Activated CD4-positive, alpha-beta memory T cell treated with anti-CD3 and anti-CD28 coated beads for 36 hours (primary cell): ENCODE measurements at regions of chr1 and their contacts with region 1.

Region 1: GRCh38 chr1:84620720-84621313 is 46.6 kb upstream of the CTBS start:
- DNase-seq: peak; percentile 87
- H3K4me3 Mint-ChIP-seq: peak overlapping the region; percentile 90
- H3K27ac Mint-ChIP-seq: peak overlapping the region; percentile 85
- H3K4me1 Mint-ChIP-seq: peaks cover 19% of the 10 kb centered on the region
- H3K27me3 Mint-ChIP-seq: peaks cover 1% of the 10 kb centered on the region

Region 2: DNA sequence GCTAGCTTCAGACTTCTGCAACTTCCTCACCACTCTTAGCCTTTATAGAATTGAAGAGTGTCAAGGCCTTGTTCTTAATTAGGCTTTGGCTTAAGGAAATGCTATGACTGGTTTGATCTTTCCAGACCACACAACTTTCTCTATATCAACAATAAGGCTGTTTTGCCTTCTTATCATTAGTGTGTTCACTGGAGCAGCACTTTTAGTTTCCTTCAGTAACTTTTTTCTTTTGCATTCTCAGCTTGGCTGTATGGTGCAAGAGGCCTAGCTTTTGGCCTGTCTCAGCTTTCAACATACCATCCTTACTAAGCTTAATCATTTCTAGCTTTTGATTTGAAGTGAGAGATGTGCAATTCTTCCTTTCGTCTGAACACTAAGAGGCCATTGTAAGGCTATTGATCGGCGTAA is 468.2 kb before region 1 on chr1:
- CTCF ChIA-PET with region 1: no interaction called
- POLR2A ChIA-PET with region 1: no interaction called
- intact Hi-C with region 1: loop called (anchors 2 kb)
- DNase-seq: peak; percentile 43
- H3K4me3 Mint-ChIP-seq: peak overlapping the region; percentile 39
- H3K27ac Mint-ChIP-seq: peak overlapping the region; percentile 86
- H3K4me1 Mint-ChIP-seq: peaks cover 79% of the 10 kb centered on the region
- H3K27me3 Mint-ChIP-seq: no peaks in the 10 kb centered on the region

Region 3: DNA sequence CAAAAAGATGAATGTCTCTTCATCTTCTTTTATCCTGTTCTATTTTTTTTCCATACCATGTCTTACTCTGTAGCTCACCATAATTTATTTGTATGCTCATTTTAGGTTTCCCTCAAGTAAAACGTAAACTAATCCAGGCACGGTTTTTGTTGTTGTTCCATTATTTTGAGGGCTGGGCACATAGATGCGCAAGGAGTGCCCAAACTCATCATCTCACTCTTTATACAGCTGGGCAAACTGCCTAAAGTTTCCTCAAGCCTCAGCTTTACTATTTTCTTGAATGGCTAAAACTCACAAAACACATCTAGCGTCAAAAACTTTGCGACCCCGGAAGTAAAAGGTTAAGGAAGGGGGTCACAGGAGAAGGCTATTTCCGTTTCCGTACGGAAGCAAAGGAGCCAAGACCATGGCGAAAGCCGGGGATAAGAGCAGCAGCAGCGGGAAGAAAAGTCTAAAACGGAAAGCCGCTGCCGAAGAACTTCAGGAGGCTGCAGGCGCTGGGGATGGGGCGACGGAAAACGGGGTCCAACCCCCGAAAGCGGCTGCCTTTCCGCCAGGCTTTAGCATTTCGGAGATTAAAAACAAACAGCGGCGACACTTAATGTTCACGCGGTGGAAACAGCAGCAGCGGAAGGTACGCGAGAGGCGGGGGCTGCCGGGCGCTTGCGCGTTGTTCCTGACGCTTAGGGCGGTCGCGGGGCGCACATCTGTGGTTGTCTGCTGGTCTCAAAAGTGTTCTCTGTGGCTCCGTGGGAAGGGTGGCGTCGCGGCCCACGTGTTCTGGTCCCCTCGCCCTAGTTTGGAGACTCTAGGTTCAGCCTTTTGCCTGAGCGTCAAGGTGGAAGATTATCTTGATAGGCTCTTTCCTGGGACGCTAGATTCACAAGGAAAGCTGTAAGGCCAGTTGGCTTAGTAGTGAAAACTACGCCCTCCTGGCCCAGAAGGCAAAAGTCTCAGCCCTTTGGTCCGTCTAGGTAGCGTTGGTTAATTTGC is 141.6 kb before region 1 on chr1 and contains the start of gene RPF1:
- CTCF ChIA-PET with region 1: interaction called, 27 read pairs
- POLR2A ChIA-PET with region 1: no interaction called
- intact Hi-C with region 1: loop called (anchors 1 kb)
- DNase-seq: peak; percentile 82
- H3K4me3 Mint-ChIP-seq: peak within 1 kb of the TSS; percentile 96
- H3K27ac Mint-ChIP-seq: peak within 1 kb of the TSS; percentile 96
- H3K4me1 Mint-ChIP-seq: peaks cover 34% of the 10 kb centered on the region
- H3K27me3 Mint-ChIP-seq: peaks cover 16% of the 10 kb centered on the region
- total RNA-seq, gene RPF1: 55.0 to 56.5 TPM

Region 4: GRCh38 chr1:84598846-84599741 is 21.7 kb before region 1 on chr1:
- CTCF ChIA-PET with region 1: interaction called, 9 read pairs
- POLR2A ChIA-PET with region 1: interaction called, 6 read pairs
- intact Hi-C with region 1: loop called (anchors 1 kb)
- DNase-seq: no peak
- H3K4me3 Mint-ChIP-seq: peak overlapping the region; percentile 27
- H3K27ac Mint-ChIP-seq: peak overlapping the region; percentile 76
- H3K4me1 Mint-ChIP-seq: peaks cover 29% of the 10 kb centered on the region
- H3K27me3 Mint-ChIP-seq: peaks cover 2% of the 10 kb centered on the region

Region 5: DNA sequence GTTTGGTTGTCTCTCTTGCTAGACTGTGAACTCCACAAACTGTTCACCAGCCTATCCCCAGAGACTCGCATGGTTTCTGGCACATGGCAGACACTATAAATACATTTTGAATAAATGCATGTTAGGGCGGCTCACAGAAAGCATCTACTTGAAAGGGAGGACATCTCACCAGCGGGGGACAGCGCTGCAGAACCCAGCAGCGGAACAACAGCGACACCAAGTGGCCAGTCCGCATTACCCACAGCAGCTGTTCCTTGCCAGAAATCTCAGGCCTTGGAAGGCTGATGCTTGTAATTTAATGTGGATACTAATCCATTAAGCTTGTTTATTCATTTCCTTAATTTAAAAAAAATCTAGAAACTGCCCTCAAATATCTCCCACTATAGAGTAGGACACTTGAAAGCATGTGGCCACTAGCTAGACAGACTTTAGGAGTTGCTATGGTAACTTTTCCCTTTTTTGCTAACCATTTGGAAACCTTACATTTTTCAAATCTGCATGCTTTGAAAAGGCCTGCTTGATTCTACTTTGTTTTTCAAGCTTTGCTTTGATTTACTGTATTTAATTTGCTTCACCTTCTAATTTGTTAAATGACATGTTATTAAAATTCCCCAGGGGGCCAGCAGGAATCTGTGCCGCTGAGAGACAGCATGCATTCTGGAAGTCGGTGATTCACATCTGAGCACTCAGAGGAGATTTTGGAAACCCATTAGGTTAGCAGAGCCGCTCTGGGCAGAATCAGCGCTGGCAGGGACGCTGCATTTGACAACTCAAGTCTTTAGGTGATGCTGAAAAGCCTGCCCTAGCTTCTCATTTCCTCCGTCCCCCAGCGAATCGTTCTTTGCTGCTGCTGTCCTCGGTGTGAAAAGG is 132.9 kb after region 1 on chr1:
- CTCF ChIA-PET with region 1: interaction called, 19 read pairs
- POLR2A ChIA-PET with region 1: no interaction called
- intact Hi-C with region 1: loop called (anchors 1 kb)
- DNase-seq: peak; percentile 86
- H3K4me3 Mint-ChIP-seq: no peak overlapping the region
- H3K27ac Mint-ChIP-seq: no peak overlapping the region
- H3K4me1 Mint-ChIP-seq: peaks cover 14% of the 10 kb centered on the region
- H3K27me3 Mint-ChIP-seq: peaks cover 27% of the 10 kb centered on the region